ENCODE measurements at regions of chr13 and their contacts with region 1.

Region 1: DNA sequence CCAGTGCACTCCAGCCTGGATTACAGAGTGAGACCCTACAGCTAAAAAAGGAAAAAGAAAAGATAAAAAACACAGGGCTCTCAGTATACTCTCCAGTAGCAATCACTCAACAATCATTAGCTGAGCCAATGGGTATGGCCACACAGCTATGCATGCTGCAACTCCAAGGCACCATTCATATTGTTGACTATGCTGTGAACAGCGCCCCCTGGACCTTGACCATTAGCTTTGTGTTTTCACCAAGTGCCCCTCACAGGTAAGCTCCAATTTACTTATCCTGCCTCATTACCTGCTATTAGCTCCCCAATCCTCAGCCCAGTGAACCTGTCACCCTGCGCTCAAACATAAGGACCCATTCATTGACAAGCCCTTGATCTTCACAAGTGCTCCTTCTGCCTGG is 35.8 kb downstream of the ZIC5 start:
- DNase-seq: no peak
- ATAC-seq: no peak
- H3K4me3 Mint-ChIP-seq: no peak overlapping the region
- H3K27ac Mint-ChIP-seq: no peak overlapping the region
- H3K4me1 Mint-ChIP-seq: no peaks in the 10 kb centered on the region
- H3K27me3 Mint-ChIP-seq: peaks cover 28% of the 10 kb centered on the region

Region 2: GRCh38 chr13:98592362-98592732 is 1343.4 kb before region 1 on chr13:
- CTCF ChIA-PET with region 1: no interaction called
- POLR2A ChIA-PET with region 1: no interaction called
- intact Hi-C with region 1: loop called in 1 of 2 experiments (anchors 5 kb)
- DNase-seq: no peak
- ATAC-seq: no peak
- H3K4me3 Mint-ChIP-seq: no peak overlapping the region
- H3K27ac Mint-ChIP-seq: no peak overlapping the region
- H3K4me1 Mint-ChIP-seq: peaks cover 12% of the 10 kb centered on the region
- H3K27me3 Mint-ChIP-seq: no peaks in the 10 kb centered on the region

Region 3: DNA sequence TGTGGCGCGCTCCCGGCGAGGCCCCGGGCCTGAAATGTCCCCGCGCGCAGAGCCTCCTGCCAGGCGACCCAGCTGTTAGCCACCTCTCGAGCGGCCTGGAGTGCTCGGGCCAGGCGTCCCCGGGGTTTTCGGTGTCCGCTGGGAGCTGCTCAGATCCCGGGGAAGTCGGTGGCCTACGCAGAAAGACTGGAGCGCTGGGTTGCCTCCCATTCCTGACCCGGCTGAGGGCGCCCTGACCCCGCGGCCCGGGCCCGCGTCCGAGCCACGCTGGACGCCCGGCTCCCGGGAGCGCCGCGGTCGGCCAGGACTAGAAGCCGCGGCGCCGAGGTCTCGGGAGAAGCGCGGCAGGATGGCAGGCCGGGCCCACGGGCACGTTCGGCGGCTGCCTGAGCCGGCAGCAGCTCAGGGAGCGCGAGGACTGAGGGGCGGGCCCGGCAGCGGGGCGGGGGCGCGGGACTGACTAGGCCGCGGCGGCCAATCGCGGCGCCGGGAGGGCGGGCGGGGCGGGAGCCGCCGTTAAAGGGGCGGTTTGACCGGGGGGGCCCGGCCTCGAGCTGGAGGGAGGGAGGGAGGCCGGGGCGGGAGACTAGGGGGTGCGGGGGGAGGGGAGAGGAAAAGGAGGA is 44.5 kb after region 1 on chr13:
- CTCF ChIA-PET with region 1: no interaction called
- POLR2A ChIA-PET with region 1: no interaction called
- intact Hi-C with region 1: no loop called
- DNase-seq: peak; percentile 80
- ATAC-seq: peak; percentile 82
- H3K4me3 Mint-ChIP-seq: peak overlapping the region; percentile 30
- H3K27ac Mint-ChIP-seq: no peak overlapping the region
- H3K4me1 Mint-ChIP-seq: peaks cover 25% of the 10 kb centered on the region
- H3K27me3 Mint-ChIP-seq: peaks cover 60% of the 10 kb centered on the region